ENCODE measurements at regions of chr1 and their contacts with region 1.

Region 1: GRCh38 chr1:111234866-111235265 is 7.4 kb downstream of the CHI3L2 start:
- DNase-seq: no peak
- H3K4me3 ChIP-seq: no peak overlapping the region
- H3K27ac ChIP-seq: no peak overlapping the region
- H3K4me1 ChIP-seq: no peaks in the 10 kb centered on the region
- H3K27me3 ChIP-seq: no peaks in the 10 kb centered on the region
- CTCF ChIP-seq: no peak
- POLR2A ChIP-seq: no peak

Region 2: GRCh38 chr1:111176678-111177077 is 58.2 kb before region 1 on chr1:
- intact Hi-C with region 1: no loop called
- DNase-seq: no peak
- H3K4me3 ChIP-seq: no peak overlapping the region
- H3K27ac ChIP-seq: no peak overlapping the region
- H3K4me1 ChIP-seq: no peaks in the 10 kb centered on the region
- H3K27me3 ChIP-seq: no peaks in the 10 kb centered on the region
- CTCF ChIP-seq: no peak
- POLR2A ChIP-seq: no peak

Region 3: DNA sequence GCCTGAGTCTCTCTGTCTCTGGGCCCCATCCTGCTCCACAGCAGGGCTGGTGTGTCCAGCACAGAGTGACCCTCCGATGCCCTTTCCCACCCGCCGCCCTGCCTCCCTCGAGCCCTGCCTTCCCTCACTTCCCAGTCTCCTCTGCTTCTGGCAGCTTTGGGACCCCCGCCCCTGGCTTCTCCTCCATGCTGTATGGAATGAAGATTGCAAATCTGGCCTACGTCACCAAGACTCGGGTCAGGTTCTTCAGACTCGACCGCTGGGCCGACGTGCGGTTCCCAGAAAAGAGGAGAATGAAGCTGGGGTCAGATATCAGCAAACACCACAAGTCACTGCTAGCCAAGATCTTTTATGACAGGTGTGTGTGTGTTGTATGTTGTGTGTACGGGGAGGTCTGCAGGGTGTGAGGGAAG is 1453.9 kb after region 1 on chr1:
- intact Hi-C with region 1: loop called (anchors 10 kb)
- DNase-seq: no peak
- H3K4me3 ChIP-seq: no peak overlapping the region
- H3K27ac ChIP-seq: peak overlapping the region; percentile 65 to 71
- H3K4me1 ChIP-seq: no peaks in the 10 kb centered on the region
- H3K27me3 ChIP-seq: no peaks in the 10 kb centered on the region
- CTCF ChIP-seq: no peak
- POLR2A ChIP-seq: no peak

Measured in breast epithelium (tissue), 4 donors.